GM10248 (cell line): ENCODE measurements at regions of chr2 and their contacts with region 1.

Region 1: DNA sequence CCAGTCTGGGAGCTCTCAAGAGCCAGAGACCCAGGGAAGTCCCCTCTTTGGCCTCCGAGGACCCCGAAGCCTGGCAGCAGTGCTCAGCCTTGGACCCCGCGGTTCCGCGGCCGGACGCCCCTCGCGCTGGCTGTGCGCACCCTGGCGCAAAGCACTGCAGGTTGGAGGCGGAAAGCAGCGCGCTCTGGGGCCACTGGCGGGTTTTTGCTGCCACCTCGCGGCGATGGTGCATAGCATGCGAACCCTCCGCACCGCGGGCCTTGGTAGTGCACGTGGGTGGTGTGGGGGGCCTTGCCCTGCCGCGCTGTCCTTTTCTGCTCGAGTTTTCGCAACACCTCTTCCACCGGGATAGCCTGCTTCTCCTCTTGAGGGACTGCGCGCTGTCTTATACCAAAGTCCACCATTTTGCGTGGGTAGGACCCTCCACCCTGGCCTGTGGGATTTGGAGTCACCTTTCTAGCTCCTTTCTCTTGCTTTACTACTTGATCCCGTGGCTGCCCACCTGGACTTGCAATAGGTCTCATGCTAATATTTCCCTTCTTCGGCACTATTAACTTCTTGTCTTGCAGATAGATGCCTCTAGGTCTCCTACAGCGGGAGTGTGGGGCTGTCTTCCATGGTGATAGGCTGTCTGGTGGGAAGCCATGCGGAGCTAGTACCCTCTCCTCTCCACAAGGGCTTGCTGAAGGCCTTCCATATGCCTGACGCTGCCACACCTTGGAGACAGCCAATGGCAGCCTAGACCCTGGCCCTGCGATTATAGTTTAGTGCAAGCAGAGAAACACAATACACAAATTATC is 14.3 kb downstream of the SIX3 start:
- DNase-seq: peak; percentile 85
- CTCF ChIP-seq: peak; percentile 97

Region 2: DNA sequence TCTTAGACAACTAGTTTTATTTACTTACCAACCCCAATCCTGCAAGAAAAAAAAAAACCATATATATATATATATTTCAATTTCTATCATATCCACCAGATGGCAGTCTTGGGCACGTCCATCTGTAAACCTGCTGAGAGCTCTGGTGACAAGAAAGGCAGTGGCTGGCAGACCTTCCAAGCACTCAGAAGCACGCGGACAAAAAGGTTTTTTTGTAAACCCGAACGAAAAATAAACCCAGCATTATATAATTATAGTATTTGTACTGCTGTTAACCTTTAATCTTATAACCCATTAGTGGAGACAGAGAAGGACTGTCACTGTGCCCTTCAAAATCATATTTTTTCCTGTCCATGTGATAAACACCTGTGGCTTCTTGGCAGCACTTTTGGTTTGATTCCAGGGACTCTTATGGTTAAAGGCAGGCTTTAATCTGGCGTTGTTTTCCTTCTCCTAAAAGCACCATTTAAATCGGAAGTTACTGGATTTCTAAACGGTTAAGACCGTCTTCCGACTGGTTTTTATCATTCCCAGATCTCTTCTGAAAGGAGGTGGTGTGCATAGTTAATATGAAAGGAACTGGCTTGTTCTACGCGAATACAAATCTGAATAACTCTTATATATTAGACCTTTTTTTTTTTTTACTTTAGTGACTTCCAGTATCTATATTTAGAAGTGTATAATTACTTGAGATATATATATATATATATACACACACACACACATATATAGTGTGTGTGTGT is 711.5 kb before region 1 on chr2:
- CTCF ChIA-PET with region 1: interaction called, 13 read pairs
- POLR2A ChIA-PET with region 1: no interaction called
- DNase-seq: peak; percentile 55
- CTCF ChIP-seq: peak; percentile 29

Region 3: DNA sequence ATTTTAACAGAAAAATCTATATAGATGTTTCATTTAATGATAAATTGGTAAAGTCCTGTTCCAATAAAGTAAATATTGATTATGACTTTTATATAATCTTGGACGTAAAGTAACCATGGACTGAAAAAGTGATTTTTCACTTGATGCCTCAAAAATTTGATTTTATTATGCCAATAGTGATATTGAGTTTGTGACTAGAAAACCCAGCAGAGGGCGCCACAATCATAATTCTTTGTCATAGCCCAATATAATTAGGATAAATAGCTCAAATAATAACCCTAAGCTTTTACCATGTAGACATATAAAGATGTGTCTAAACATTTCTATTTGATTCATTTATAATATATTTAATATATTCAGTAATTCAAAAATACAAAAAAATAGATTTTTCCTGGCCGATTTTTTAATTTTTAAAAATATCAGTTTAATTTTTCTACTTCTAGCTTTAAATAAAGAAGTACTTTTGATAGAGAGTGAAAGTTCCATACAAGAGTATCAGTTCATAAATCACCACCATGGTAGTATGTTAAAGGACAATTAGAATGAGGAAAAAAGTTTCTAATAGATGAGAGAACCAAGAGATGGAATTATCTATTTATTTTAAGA is 563.4 kb before region 1 on chr2:
- CTCF ChIA-PET with region 1: interaction called, 70 read pairs
- POLR2A ChIA-PET with region 1: no interaction called
- DNase-seq: no peak
- CTCF ChIP-seq: peak; percentile 48

Region 4: GRCh38 chr2:44560352-44560751 is 395.4 kb before region 1 on chr2:
- CTCF ChIA-PET with region 1: interaction called, 36 read pairs
- POLR2A ChIA-PET with region 1: no interaction called
- DNase-seq: no peak
- CTCF ChIP-seq: peak; percentile 52

Region 5: GRCh38 chr2:44974064-44974715 is 18.4 kb after region 1 on chr2:
- CTCF ChIA-PET with region 1: interaction called, 53 read pairs
- POLR2A ChIA-PET with region 1: no interaction called
- DNase-seq: no peak
- CTCF ChIP-seq: peak; percentile 27

Region 6: DNA sequence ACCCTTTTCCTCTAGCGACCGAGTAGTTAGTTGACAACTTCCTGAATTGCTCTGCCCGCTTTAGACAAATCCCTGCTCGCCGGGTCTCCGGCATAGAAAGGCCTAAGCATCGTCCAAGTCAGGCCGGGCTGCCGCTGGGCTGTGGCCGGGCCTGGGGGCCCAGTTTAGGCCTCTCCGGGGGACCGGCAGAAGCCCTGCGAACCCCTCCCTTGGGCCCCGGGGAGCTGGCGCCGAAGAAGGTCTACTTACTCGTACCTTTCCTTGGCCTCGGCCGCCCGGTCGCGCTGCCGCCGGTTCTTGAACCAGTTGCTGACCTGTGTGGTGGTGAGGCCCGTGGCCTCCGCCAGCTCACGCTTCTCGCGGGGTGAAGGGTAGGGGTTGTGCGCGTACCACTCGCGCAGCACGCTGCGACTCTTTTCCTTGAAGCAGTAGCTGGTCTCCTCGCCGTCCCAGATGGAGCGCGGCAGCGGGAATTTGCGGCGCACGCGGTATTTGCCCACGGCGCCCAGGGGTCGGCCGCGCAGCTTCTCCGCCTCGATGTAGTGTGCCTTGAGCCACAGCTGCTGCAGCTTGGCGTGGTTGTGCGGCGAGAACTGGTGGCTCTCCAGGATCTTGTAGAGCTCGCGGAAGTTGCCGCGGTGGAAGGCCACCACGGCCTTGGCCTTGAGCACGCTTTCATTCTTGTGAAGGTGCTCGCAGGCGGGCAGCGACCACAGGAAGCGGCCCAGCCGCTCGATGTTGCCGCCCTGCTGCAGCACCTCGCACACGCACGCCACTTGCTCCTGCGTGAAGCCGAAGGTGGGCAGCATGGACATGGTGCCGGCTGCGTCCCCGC is 52.7 kb after region 1 on chr2:
- CTCF ChIA-PET with region 1: no interaction called
- POLR2A ChIA-PET with region 1: no interaction called
- DNase-seq: peak; percentile 33
- CTCF ChIP-seq: no peak

Region 7: DNA sequence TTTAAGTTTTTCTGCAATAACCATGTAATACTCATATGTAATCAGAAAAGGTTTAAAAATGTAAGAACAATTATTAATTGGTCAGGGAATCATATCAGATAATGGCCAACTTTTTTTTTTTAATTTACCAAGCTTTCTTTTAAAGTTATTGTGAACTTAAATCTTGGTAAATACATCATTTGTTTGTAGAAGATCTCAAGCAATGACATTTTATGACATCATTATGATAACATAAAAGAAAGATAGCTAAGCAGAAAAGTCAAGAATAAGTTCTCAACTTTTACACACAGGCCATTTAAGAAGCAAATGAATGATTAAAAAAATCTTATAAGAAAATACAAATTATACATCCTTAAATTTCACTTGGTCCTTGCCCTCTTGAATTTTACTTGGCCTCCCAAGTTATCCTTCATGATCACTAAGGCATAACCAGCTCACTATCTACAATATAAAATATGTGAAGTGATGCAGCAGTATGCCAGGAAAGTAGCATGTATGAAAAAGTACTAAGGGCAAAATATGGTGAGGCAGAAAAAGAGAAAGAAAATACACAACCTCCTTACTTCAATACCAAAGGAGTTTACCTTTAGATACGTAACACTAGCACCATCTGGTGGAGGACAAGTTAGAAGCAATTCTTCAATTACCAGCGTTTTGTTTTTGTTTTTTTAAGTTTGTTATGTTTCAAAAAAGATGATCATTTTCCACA is 538.6 kb after region 1 on chr2:
- CTCF ChIA-PET with region 1: interaction called, 10 read pairs
- POLR2A ChIA-PET with region 1: no interaction called
- DNase-seq: peak; percentile 45
- CTCF ChIP-seq: peak; percentile 54